ENCODE measurements at regions of chr11 and their contacts with region 1.

Region 1: DNA sequence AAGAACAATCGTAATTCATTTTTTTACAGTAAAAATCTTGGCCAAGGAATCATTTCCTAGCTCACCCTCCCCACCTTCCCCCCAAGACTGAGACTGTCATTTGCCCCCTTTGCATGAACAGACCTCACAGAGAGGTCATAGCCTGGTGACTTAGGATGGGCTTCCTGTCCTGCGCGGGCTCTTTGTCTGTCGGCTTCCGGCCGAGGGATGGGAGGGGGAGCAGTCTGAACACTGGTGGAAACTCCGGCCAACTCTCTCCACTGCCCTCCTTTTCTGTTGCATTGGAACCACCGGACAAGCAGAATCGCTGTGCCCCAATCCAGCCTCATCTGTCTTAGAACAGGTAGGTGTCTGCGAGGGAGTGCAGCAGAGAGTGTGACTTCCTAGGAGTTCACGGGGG is 41.7 kb downstream of the TEAD1 start:
- DNase-seq: no peak
- ATAC-seq: no peak
- H3K4me3 ChIP-seq: no peak overlapping the region
- H3K4me3 Mint-ChIP-seq: no peak overlapping the region
- H3K27ac ChIP-seq: no peak overlapping the region
- H3K27ac Mint-ChIP-seq: no peak overlapping the region
- H3K4me1 ChIP-seq: peaks cover 9% of the 10 kb centered on the region
- H3K4me1 Mint-ChIP-seq: peaks cover 18% of the 10 kb centered on the region
- H3K27me3 ChIP-seq: peaks cover 22 to 32% of the 10 kb centered on the region in 2 experiments
- H3K27me3 Mint-ChIP-seq: peaks cover 83% of the 10 kb centered on the region
- CTCF ChIP-seq: no peak

Region 2: DNA sequence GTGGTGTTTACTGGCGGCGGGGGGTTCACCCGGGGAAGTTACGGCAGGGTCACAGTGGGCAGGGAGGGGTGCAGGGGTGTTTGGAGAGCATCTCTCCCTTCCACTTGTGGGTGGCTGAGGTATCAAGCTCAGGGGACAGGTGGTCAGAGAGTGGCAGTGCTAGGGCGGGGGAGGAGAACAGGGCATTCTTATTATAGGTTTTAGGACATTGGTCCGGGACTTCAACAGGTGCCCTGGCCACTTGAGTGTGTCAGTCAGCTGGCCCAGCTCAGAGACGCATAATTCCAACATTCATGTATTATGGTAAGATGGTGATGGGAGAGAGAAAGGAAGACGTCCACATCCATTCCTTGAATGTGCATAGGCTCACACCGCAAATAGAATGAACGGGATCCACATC is 60.0 kb after region 1 on chr11:
- CTCF ChIA-PET with region 1: no interaction called
- POLR2A ChIA-PET with region 1: no interaction called
- intact Hi-C with region 1: loop called in 1 of 2 experiments (anchors 2 kb)
- DNase-seq: no peak
- ATAC-seq: no peak
- H3K4me3 ChIP-seq: no peak overlapping the region
- H3K4me3 Mint-ChIP-seq: no peak overlapping the region
- H3K27ac ChIP-seq: no peak overlapping the region
- H3K27ac Mint-ChIP-seq: no peak overlapping the region
- H3K4me1 ChIP-seq: no peaks in the 10 kb centered on the region
- H3K4me1 Mint-ChIP-seq: no peaks in the 10 kb centered on the region
- H3K27me3 ChIP-seq: no peaks in the 10 kb centered on the region
- H3K27me3 Mint-ChIP-seq: peaks cover 45% of the 10 kb centered on the region
- CTCF ChIP-seq: no peak

Measured in CD4-positive, alpha-beta T cell (primary cell).